Posterior vena cava (tissue), 2 donors: ENCODE measurements at regions of chr17 and their contacts with region 1.

Region 1: DNA sequence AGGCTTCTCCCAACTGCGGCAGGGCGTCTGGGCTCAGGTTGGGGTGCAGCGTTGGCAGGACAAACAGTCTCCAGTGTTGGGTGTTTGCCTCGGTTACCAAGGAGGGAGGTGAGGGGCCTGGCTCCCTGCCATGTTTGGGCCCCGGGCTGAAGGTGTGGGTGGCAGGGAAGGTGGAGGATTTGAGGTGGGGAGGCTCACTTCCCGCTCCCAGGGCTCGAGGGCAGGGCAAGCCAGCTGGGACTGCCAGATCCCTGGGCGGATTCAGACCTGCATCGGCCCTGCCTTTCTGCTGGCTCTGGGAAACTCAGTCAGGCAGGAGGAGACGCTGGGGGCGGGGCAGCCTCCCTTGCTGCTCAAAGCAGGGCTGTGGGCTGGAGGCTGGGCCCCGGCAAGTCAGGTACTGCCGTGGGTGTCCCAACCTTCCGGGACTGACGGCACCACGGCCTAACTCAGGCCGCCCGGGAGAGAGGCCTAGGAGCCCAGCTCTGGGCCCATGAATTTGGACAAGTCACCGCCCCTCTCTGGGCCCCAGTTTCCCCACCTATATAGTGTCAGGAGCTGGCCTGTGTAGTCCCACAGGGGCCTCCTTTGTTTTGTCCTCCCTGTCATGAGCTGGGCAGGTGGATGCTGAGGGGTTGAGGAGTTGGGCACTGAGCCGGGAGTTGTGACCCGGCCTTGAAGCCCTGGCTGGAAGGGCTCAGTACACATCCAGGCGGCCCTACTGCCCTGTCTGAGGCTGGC is 31.4 kb upstream of the KRT17 start:
- DNase-seq: no peak

Region 2: GRCh38 chr17:41352597-41353366 is 303.0 kb before region 1 on chr17:
- intact Hi-C with region 1: no loop called
- DNase-seq: no peak

Region 3: GRCh38 chr17:41567317-41567716 is 88.5 kb before region 1 on chr17:
- intact Hi-C with region 1: loop called in 1 of 2 experiments (anchors 10 kb)
- DNase-seq: peak; percentile 1